Activated CD4-positive, alpha-beta memory T cell treated with anti-CD3 and anti-CD28 coated beads for 36 hours (primary cell): ENCODE measurements at regions of chr12 and their contacts with region 1.

Region 1: GRCh38 chr12:98593351-98594049 is at the start of gene SLC25A3:
- DNase-seq: peak; percentile 96
- H3K4me3 Mint-ChIP-seq: peak within 1 kb of the TSS; percentile 91
- H3K27ac Mint-ChIP-seq: peak within 1 kb of the TSS; percentile 97
- H3K4me1 Mint-ChIP-seq: peaks cover 29% of the 10 kb centered on the region
- H3K27me3 Mint-ChIP-seq: no peaks in the 10 kb centered on the region
- total RNA-seq, gene SLC25A3: 584 to 620 TPM

Region 2: DNA sequence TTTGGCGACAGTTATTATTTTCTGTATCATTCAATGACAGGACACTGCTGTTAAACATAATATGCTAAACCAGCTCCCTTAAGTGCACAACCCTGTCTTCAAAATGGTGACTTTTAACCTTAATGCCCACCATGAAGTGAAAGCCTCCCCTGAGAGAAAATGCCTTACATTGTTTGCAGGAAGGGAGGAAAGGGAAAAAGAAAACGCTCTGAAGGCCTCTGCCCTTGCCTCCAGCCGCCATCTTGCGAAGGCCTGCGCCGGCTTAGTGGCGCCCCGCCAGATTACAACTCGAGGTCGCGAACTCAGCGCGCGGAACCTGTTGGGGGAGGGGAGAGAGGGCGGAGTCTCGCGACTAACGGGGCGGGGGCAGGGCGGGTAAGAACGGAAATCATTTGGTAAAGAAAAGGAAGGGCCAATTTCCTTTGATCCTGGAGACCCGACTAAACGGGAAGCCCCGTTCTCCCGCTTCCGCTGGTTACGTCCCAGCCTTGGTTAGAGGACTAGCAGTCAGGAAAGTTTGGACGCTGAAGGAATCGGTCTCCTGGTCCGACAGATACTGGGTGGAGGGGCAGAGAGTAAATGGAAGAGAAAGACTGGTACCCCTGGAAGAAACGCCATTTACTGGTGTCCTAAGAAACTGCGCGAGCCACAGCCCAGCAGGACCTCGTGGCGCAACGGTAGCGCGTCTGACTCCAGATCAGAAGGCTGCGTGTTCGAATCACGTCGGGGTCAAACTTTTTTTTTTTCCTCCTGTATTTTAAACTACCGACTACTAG is 89.7 kb before region 1 on chr12:
- CTCF ChIA-PET with region 1: no interaction called
- POLR2A ChIA-PET with region 1: interaction called, 4 read pairs
- intact Hi-C with region 1: loop called (anchors 1 kb)
- DNase-seq: peak; percentile 97
- H3K4me3 Mint-ChIP-seq: peak overlapping the region; percentile 86
- H3K27ac Mint-ChIP-seq: peak overlapping the region; percentile 99
- H3K4me1 Mint-ChIP-seq: peaks cover 39% of the 10 kb centered on the region
- H3K27me3 Mint-ChIP-seq: peaks cover 9% of the 10 kb centered on the region

Region 3: GRCh38 chr12:98544751-98545150 is 48.7 kb before region 1 on chr12:
- CTCF ChIA-PET with region 1: no interaction called
- POLR2A ChIA-PET with region 1: interaction called, 5 read pairs
- intact Hi-C with region 1: loop called (anchors 5 kb)
- DNase-seq: no peak
- H3K4me3 Mint-ChIP-seq: no peak overlapping the region
- H3K27ac Mint-ChIP-seq: no peak overlapping the region
- H3K4me1 Mint-ChIP-seq: peaks cover 19% of the 10 kb centered on the region
- H3K27me3 Mint-ChIP-seq: no peaks in the 10 kb centered on the region

Region 4: GRCh38 chr12:98644711-98645402 is 51.4 kb after region 1 on chr12 and contains the starts of genes APAF1 and IKBIP:
- CTCF ChIA-PET with region 1: interaction called, 3 read pairs
- POLR2A ChIA-PET with region 1: interaction called, 40 read pairs
- intact Hi-C with region 1: loop called (anchors 1 kb)
- DNase-seq: peak; percentile 98
- H3K4me3 Mint-ChIP-seq: peak within 1 kb of the TSS; percentile 96
- H3K27ac Mint-ChIP-seq: peak within 1 kb of the TSS; percentile 95
- H3K4me1 Mint-ChIP-seq: peaks cover 28% of the 10 kb centered on the region
- H3K27me3 Mint-ChIP-seq: no peaks in the 10 kb centered on the region
- total RNA-seq, gene APAF1: 19.6 to 20.8 TPM
- total RNA-seq, gene IKBIP: 24.9 to 26.2 TPM

Region 5: GRCh38 chr12:99413751-99414150 is 820.3 kb after region 1 on chr12:
- CTCF ChIA-PET with region 1: no interaction called
- POLR2A ChIA-PET with region 1: no interaction called
- intact Hi-C with region 1: no loop called
- DNase-seq: no peak
- H3K4me3 Mint-ChIP-seq: no peak overlapping the region
- H3K27ac Mint-ChIP-seq: no peak overlapping the region
- H3K4me1 Mint-ChIP-seq: no peaks in the 10 kb centered on the region
- H3K27me3 Mint-ChIP-seq: no peaks in the 10 kb centered on the region